CD4-positive, alpha-beta T cell (primary cell): ENCODE measurements at regions of chr2 and their contacts with region 1.

Region 1: GRCh38 chr2:152740743-152741328 is 22.4 kb downstream of the ARL6IP6 start:
- DNase-seq: peak in 3 of 14 experiments; percentile 67 to 69 (median 68)
- ATAC-seq: peak; percentile 94
- H3K4me3 ChIP-seq: no peak overlapping the region
- H3K4me3 Mint-ChIP-seq: no peak overlapping the region
- H3K27ac ChIP-seq: no peak overlapping the region
- H3K27ac Mint-ChIP-seq: no peak overlapping the region
- H3K4me1 ChIP-seq: no peaks in the 10 kb centered on the region
- H3K4me1 Mint-ChIP-seq: peaks cover 14% of the 10 kb centered on the region
- H3K27me3 ChIP-seq: no peaks in the 10 kb centered on the region
- H3K27me3 Mint-ChIP-seq: no peaks in the 10 kb centered on the region
- CTCF ChIP-seq: peak; percentile 96

Region 2: GRCh38 chr2:152664703-152665102 is 76.1 kb before region 1 on chr2:
- CTCF ChIA-PET with region 1: no interaction called
- POLR2A ChIA-PET with region 1: no interaction called
- intact Hi-C with region 1: no loop called
- DNase-seq: no peak
- ATAC-seq: no peak
- H3K4me3 ChIP-seq: no peak overlapping the region
- H3K4me3 Mint-ChIP-seq: no peak overlapping the region
- H3K27ac ChIP-seq: no peak overlapping the region
- H3K27ac Mint-ChIP-seq: no peak overlapping the region
- H3K4me1 ChIP-seq: no peaks in the 10 kb centered on the region
- H3K4me1 Mint-ChIP-seq: no peaks in the 10 kb centered on the region
- H3K27me3 ChIP-seq: no peaks in the 10 kb centered on the region
- H3K27me3 Mint-ChIP-seq: no peaks in the 10 kb centered on the region
- CTCF ChIP-seq: no peak

Region 3: GRCh38 chr2:152762202-152762601 is 21.4 kb after region 1 on chr2:
- CTCF ChIA-PET with region 1: no interaction called
- POLR2A ChIA-PET with region 1: no interaction called
- intact Hi-C with region 1: no loop called
- DNase-seq: no peak
- ATAC-seq: no peak
- H3K4me3 ChIP-seq: no peak overlapping the region
- H3K4me3 Mint-ChIP-seq: no peak overlapping the region
- H3K27ac ChIP-seq: no peak overlapping the region
- H3K27ac Mint-ChIP-seq: no peak overlapping the region
- H3K4me1 ChIP-seq: no peaks in the 10 kb centered on the region
- H3K4me1 Mint-ChIP-seq: no peaks in the 10 kb centered on the region
- H3K27me3 ChIP-seq: no peaks in the 10 kb centered on the region
- H3K27me3 Mint-ChIP-seq: no peaks in the 10 kb centered on the region
- CTCF ChIP-seq: no peak

Region 4: DNA sequence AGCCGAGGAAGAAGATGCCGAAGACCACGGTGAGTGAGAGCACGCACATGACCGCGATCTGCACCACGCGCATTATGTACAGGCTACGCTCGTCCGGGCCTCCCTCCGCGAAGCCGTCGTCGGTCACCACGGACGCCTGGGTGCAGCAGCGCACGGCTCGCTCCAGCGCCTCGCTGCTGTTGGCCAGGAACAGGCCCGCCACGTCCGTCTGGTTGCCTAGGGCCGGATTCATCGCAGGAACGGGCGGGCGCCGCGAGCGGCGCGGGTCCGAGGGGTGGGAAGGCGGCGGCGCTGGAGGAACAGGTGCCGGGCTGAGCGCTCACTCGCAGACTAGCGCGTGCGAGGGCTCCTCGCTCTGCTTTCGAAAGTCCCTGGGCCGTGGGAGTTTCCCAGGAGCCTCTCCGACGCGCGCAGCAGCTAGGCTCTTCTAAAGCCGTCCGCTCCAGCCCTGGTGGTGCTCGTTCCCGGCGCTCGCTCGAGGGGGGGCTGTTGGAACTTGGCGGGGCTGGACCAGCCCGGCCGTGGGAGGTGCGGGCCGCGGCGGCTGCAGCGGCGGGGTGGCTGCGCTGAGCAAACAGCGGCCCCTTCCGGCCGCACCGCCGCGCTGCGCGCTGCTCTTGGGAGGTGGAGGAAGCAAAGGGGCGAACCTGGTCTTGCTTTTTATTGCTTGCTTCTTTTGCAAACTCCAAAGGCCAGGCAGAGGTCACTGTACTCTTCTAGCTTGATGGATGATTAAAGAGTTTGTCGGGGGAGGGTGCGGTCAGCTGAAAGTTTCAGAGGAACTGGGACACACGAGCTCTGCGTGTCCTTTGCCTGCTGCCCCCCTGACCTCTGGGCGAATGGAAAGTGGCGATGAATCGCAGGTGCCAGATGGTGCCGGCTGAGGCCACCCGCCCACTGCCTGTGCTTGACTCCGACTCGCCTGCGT is 737.8 kb after region 1 on chr2 and contains the start of gene RPRM:
- CTCF ChIA-PET with region 1: no interaction called
- POLR2A ChIA-PET with region 1: no interaction called
- intact Hi-C with region 1: loop called (anchors 5 kb)
- DNase-seq: peak; percentile 3 to 75 (median 41)
- ATAC-seq: peak; percentile 84
- H3K4me3 ChIP-seq: peak within 1 kb of the TSS; percentile 42
- H3K4me3 Mint-ChIP-seq: peak within 1 kb of the TSS; percentile 86
- H3K27ac ChIP-seq: no peak within 1 kb of the TSS
- H3K27ac Mint-ChIP-seq: no peak within 1 kb of the TSS
- H3K4me1 ChIP-seq: peaks cover 25% of the 10 kb centered on the region
- H3K4me1 Mint-ChIP-seq: peaks cover 20% of the 10 kb centered on the region
- H3K27me3 ChIP-seq: peaks cover 34 to 68% of the 10 kb centered on the region in 2 experiments
- H3K27me3 Mint-ChIP-seq: peaks cover 81% of the 10 kb centered on the region
- CTCF ChIP-seq: peak; percentile 70
- total RNA-seq, gene RPRM: not detected